Dendritic cell treated with granulocyte-macrophage colony-stimulating factor and Interleukin-4, amounts not matched to agents 40 ng/mL and 50 ng/mL, for 4 days (primary cell): ENCODE measurements at regions of chr1 and their contacts with region 1.

Region 1: GRCh38 chr1:47262787-47263413 is 30.9 kb upstream of the TAL1 start:
- H3K4me3 Mint-ChIP-seq: no peak overlapping the region
- H3K27ac Mint-ChIP-seq: no peak overlapping the region
- H3K4me1 Mint-ChIP-seq: no peaks in the 10 kb centered on the region
- H3K27me3 Mint-ChIP-seq: no peaks in the 10 kb centered on the region

Region 2: GRCh38 chr1:47179017-47179987 is 83.6 kb before region 1 on chr1:
- intact Hi-C with region 1: loop called (anchors 1 kb)
- H3K4me3 Mint-ChIP-seq: peak overlapping the region; percentile 79
- H3K27ac Mint-ChIP-seq: peak overlapping the region; percentile 57
- H3K4me1 Mint-ChIP-seq: peaks cover 18% of the 10 kb centered on the region
- H3K27me3 Mint-ChIP-seq: peaks cover 42% of the 10 kb centered on the region

Region 3: DNA sequence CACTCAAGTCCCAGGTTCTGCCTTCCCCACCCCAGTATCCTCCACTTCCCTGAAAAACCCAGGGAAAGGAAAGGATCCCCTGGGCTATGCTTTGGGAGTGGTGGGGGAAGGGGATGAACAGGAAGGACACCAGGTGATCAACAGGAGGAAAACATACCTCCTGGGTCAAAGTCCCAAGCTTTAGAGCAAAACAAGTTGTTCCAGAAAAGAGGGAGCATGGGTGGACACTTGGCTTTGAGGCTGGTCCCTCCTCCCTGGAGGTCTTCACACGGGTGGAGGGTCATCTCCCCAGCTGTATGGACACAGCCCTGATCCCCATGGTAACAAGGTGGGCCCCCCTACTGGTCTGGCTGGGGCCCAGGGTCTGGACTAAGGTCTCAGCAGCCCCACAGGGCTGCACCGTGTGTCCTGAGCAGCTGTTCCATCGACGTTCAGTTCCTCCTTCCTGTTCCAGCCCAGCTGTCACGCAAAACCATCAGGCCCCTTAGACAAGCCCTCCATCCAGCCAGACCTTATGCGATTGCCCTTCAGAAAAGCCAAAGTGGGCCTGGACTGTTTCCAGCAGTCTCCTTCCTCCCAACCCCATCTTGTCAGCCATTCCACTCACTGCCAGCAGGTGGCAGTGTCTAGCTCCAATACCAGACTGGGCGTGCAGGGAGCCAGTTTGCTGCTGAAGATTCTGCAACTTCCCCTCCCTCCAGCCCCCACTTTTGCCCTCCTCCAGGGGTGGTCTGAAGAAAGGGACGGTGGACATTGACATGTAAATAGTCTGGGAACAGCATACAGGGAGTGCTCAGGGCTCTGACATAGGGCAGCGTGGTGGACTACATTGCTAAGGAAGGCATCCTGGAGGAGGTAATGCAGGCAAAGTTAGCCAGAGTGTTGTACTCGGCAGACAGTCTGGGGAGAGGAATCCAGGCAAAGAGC is 70.2 kb before region 1 on chr1:
- intact Hi-C with region 1: loop called (anchors 1 kb)
- H3K4me3 Mint-ChIP-seq: no peak overlapping the region
- H3K27ac Mint-ChIP-seq: no peak overlapping the region
- H3K4me1 Mint-ChIP-seq: peaks cover 17% of the 10 kb centered on the region
- H3K27me3 Mint-ChIP-seq: peaks cover 14% of the 10 kb centered on the region

Region 4: GRCh38 chr1:47679301-47679791 is 416.4 kb after region 1 on chr1:
- intact Hi-C with region 1: no loop called
- H3K4me3 Mint-ChIP-seq: no peak overlapping the region
- H3K27ac Mint-ChIP-seq: no peak overlapping the region
- H3K4me1 Mint-ChIP-seq: peaks cover 12% of the 10 kb centered on the region
- H3K27me3 Mint-ChIP-seq: peaks cover 4% of the 10 kb centered on the region